Heart left ventricle (tissue), 16 donors: ENCODE measurements at regions of chr11 and their contacts with region 1.

Region 1: GRCh38 chr11:11538277-11538960 is 83.4 kb downstream of the GALNT18 start:
- DNase-seq: peak; percentile 80 to 89 (median 84)
- ATAC-seq: peak; percentile 79 to 82 (median 80)
- H3K4me3 ChIP-seq: no peak overlapping the region
- H3K27ac ChIP-seq: peak overlapping the region; percentile 69 to 91 (median 84)
- H3K4me1 ChIP-seq: peaks cover 29 to 90% (median 66%) of the 10 kb centered on the region in 12 donors
- H3K27me3 ChIP-seq: no peaks in the 10 kb centered on the region
- CTCF ChIP-seq: no peak
- POLR2A ChIP-seq: no peak

Region 2: GRCh38 chr11:11400635-11401232 is 137.7 kb before region 1 on chr11:
- intact Hi-C with region 1: loop called in 4 of 10 experiments (anchors 5 to 10 kb)
- DNase-seq: no peak
- ATAC-seq: no peak
- H3K4me3 ChIP-seq: no peak overlapping the region
- H3K27ac ChIP-seq: no peak overlapping the region
- H3K4me1 ChIP-seq: peaks cover 0 to 43% (median 10%) of the 10 kb centered on the region in 12 donors
- H3K27me3 ChIP-seq: no peaks in the 10 kb centered on the region
- CTCF ChIP-seq: peak in 7 of 12 donors; percentile 6 to 36 (median 19)
- POLR2A ChIP-seq: no peak

Region 3: DNA sequence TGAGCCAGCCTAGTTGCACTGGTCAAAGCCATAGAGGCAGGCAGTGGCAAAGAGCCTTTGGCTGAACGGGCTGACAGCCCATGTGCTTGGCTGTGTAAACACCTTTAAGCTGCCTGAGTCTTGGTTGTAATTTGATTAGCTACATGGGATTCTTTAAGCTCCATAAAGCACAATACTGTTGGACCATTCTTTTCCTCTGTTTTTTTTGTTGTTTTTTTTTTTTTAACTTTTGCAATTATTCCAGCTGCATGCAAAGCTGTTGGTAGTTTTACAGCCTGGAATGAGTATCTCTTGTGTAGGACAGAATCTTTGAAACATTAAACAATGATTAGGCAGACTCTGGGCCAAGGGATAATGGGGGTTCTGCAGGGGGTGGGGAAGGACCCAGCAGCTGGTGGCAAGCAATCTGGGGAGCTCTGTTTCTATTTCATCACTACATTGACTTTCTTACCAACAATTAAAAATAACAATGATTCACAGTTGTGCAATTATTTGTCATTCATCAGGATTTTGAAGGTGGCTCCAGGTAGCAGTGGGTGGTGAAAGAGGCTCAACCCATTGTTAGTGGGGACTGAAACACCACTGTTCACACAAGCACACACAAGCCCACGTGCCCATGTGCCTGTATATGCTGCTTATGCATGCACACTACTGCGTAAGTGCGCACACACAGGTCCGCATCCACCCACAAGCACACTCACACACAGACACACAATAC is 115.8 kb before region 1 on chr11:
- intact Hi-C with region 1: loop called in 1 of 10 experiments (anchors 10 kb)
- DNase-seq: no peak
- ATAC-seq: no peak
- H3K4me3 ChIP-seq: no peak overlapping the region
- H3K27ac ChIP-seq: no peak overlapping the region
- H3K4me1 ChIP-seq: peaks cover 6 to 54% (median 28%) of the 10 kb centered on the region in 12 donors
- H3K27me3 ChIP-seq: peaks cover 0 to 5% (median 0%) of the 10 kb centered on the region in 9 donors
- CTCF ChIP-seq: no peak
- POLR2A ChIP-seq: no peak

Region 4: GRCh38 chr11:11569936-11570491 is 31.6 kb after region 1 on chr11:
- intact Hi-C with region 1: loop called in 3 of 10 experiments (anchors 5 kb)
- DNase-seq: peak; percentile 79 to 84 (median 80)
- ATAC-seq: peak; percentile 74 to 93 (median 90)
- H3K4me3 ChIP-seq: peak overlapping the region in 6 of 12 donors; percentile 8 to 35 (median 26)
- H3K27ac ChIP-seq: peak overlapping the region; percentile 6 to 88 (median 74)
- H3K4me1 ChIP-seq: peaks cover 0 to 84% (median 33%) of the 10 kb centered on the region in 12 donors
- H3K27me3 ChIP-seq: no peaks in the 10 kb centered on the region
- CTCF ChIP-seq: peak in 8 of 12 donors; percentile 17 to 47 (median 28)
- POLR2A ChIP-seq: no peak

Region 5: DNA sequence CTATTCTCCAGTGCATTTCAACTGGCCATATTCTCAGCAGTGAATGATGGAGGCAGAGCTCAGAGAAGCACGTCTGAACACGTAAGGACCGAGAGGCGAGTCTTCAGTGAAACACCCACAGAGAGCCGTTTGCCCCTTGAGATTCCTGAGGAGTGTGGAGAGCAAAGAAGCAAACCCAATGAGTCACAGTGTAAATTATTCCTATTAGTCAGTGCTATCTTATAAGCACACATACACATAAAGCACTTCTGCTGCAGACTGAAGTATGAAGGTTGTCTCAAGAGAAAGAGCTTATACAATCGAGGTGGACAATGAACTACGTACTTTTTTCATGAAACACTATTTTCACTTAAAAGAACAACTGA is 46.0 kb after region 1 on chr11:
- intact Hi-C with region 1: loop called in 4 of 10 experiments (anchors 5 kb)
- DNase-seq: no peak
- ATAC-seq: peak in 1 of 4 donors; percentile 22
- H3K4me3 ChIP-seq: no peak overlapping the region
- H3K27ac ChIP-seq: peak overlapping the region in 2 of 12 donors; percentile 44 to 56
- H3K4me1 ChIP-seq: peaks cover 12 to 88% (median 52%) of the 10 kb centered on the region in 12 donors
- H3K27me3 ChIP-seq: no peaks in the 10 kb centered on the region
- CTCF ChIP-seq: no peak
- POLR2A ChIP-seq: no peak